ENCODE measurements at regions of chr3 and their contacts with region 1.

Region 1: GRCh38 chr3:7787871-7788828 is 713.5 kb upstream of the LMCD1 start:
- DNase-seq: peak; percentile 26
- H3K4me3 Mint-ChIP-seq: no peak overlapping the region
- H3K27ac Mint-ChIP-seq: peak overlapping the region; percentile 76
- H3K4me1 Mint-ChIP-seq: peaks cover 29% of the 10 kb centered on the region
- H3K27me3 Mint-ChIP-seq: no peaks in the 10 kb centered on the region
- CTCF ChIP-seq: no peak

Region 2: GRCh38 chr3:6542795-6543194 is 1245.4 kb before region 1 on chr3:
- CTCF ChIA-PET with region 1: no interaction called
- intact Hi-C with region 1: no loop called
- DNase-seq: no peak
- H3K4me3 Mint-ChIP-seq: no peak overlapping the region
- H3K27ac Mint-ChIP-seq: no peak overlapping the region
- H3K4me1 Mint-ChIP-seq: no peaks in the 10 kb centered on the region
- H3K27me3 Mint-ChIP-seq: no peaks in the 10 kb centered on the region
- CTCF ChIP-seq: no peak

Region 3: GRCh38 chr3:7285505-7285904 is 502.6 kb before region 1 on chr3:
- CTCF ChIA-PET with region 1: no interaction called
- intact Hi-C with region 1: loop called (anchors 10 kb)
- DNase-seq: no peak
- H3K4me3 Mint-ChIP-seq: no peak overlapping the region
- H3K27ac Mint-ChIP-seq: no peak overlapping the region
- H3K4me1 Mint-ChIP-seq: no peaks in the 10 kb centered on the region
- H3K27me3 Mint-ChIP-seq: no peaks in the 10 kb centered on the region
- CTCF ChIP-seq: no peak

Region 4: DNA sequence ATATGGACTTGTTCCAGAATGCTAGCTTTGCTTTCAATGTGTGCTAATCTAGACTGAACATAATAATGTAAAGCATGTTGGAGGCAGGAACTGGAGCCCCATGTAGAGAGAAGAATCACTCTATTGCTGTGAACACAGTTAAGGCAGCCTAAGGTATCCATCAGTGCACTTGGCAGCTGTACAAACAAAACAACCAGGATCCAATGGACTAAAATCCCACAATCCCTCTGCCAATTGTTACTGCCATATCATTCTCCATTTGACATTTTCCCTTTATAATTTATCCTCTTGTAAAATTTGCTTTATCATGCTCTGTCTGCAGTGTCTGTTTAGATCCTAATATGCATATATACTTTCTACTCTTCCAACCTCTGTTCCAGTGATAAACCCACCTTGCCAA is 43.3 kb before region 1 on chr3:
- CTCF ChIA-PET with region 1: no interaction called
- intact Hi-C with region 1: no loop called
- DNase-seq: no peak
- H3K4me3 Mint-ChIP-seq: no peak overlapping the region
- H3K27ac Mint-ChIP-seq: no peak overlapping the region
- H3K4me1 Mint-ChIP-seq: no peaks in the 10 kb centered on the region
- H3K27me3 Mint-ChIP-seq: no peaks in the 10 kb centered on the region
- CTCF ChIP-seq: no peak

Region 5: DNA sequence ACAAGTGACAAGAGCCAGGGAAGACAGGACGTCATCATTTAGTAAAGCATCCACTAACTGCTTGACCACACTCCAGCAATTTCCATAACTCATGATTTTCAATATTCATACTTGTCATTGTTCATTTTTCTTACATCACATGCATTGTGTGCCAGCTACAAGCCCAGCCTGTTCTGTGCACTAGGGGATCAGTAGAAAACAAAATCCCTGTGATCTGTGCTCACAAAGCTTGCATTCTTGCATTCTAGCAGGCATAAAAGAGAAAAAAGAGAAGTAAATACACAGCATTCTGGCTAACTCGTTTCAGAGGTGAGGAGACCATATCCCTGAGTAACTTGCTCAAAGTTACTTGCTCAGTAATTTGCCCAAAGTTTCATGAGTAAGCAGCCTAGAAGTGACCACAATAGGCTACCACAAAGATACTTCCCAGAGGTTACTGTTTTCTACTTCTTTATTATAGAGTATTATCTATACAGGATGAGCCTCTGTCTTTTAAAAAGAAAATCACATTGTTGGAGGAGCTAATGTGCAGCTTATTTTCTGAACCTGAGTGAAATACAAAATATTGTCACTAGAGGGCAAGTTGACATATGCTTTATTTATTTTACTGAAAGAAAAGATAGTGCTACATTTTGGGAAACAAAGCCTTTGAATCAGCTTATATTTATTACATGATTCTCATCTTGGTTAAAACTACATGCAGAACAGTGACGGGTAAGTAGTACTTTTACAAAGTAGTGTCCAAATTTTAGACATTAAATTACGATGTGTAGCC is 12.0 kb after region 1 on chr3:
- CTCF ChIA-PET with region 1: no interaction called
- intact Hi-C with region 1: no loop called
- DNase-seq: no peak
- H3K4me3 Mint-ChIP-seq: no peak overlapping the region
- H3K27ac Mint-ChIP-seq: no peak overlapping the region
- H3K4me1 Mint-ChIP-seq: no peaks in the 10 kb centered on the region
- H3K27me3 Mint-ChIP-seq: no peaks in the 10 kb centered on the region
- CTCF ChIP-seq: no peak

Region 6: GRCh38 chr3:8166006-8166405 is 377.9 kb after region 1 on chr3:
- CTCF ChIA-PET with region 1: no interaction called
- intact Hi-C with region 1: no loop called
- DNase-seq: no peak
- H3K4me3 Mint-ChIP-seq: no peak overlapping the region
- H3K27ac Mint-ChIP-seq: no peak overlapping the region
- H3K4me1 Mint-ChIP-seq: no peaks in the 10 kb centered on the region
- H3K27me3 Mint-ChIP-seq: no peaks in the 10 kb centered on the region
- CTCF ChIP-seq: no peak

Measured in Calu3 (cell line).